ENCODE measurements at regions of chr2 and their contacts with region 1.

Region 1: DNA sequence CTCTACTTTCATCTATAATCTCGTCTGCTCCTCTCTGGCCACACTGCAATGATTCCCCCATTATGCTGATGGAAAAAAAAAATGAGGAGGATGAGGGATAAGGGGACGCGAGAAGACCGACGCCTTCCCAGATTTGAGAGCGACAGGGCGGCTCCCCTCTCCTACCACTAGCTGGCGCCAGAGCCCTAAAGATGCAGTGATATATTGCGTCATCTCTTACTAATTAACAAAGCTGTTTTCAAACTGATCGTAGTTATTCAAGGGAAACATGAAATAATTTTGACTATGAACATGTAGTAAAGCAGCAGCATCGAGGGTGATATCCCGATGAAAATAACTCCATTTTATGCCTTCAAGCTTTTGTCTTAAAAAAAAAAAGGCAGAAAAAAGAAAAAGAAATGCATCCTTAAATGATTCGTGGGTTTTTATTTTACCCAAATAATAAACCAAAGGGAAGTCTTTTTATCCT is 48.0 kb upstream of the HNRNPA3 start:
- DNase-seq: peak; percentile 90
- H3K4me3 Mint-ChIP-seq: no peak overlapping the region
- H3K27ac Mint-ChIP-seq: no peak overlapping the region
- H3K4me1 Mint-ChIP-seq: peaks cover 21% of the 10 kb centered on the region
- H3K27me3 Mint-ChIP-seq: no peaks in the 10 kb centered on the region

Region 2: GRCh38 chr2:176518823-176519222 is 645.8 kb before region 1 on chr2:
- CTCF ChIA-PET with region 1: no interaction called
- intact Hi-C with region 1: no loop called
- DNase-seq: no peak
- H3K4me3 Mint-ChIP-seq: no peak overlapping the region
- H3K27ac Mint-ChIP-seq: no peak overlapping the region
- H3K4me1 Mint-ChIP-seq: peaks cover 3% of the 10 kb centered on the region
- H3K27me3 Mint-ChIP-seq: no peaks in the 10 kb centered on the region

Region 3: GRCh38 chr2:176814306-176815052 is 350.1 kb before region 1 on chr2:
- CTCF ChIA-PET with region 1: no interaction called
- intact Hi-C with region 1: no loop called
- DNase-seq: peak; percentile 19
- H3K4me3 Mint-ChIP-seq: no peak overlapping the region
- H3K27ac Mint-ChIP-seq: no peak overlapping the region
- H3K4me1 Mint-ChIP-seq: peaks cover 12% of the 10 kb centered on the region
- H3K27me3 Mint-ChIP-seq: no peaks in the 10 kb centered on the region

Region 4: GRCh38 chr2:177106212-177106611 is 58.4 kb before region 1 on chr2:
- CTCF ChIA-PET with region 1: no interaction called
- intact Hi-C with region 1: no loop called
- DNase-seq: peak; percentile 8
- H3K4me3 Mint-ChIP-seq: no peak overlapping the region
- H3K27ac Mint-ChIP-seq: no peak overlapping the region
- H3K4me1 Mint-ChIP-seq: no peaks in the 10 kb centered on the region
- H3K27me3 Mint-ChIP-seq: peaks cover 6% of the 10 kb centered on the region

Region 5: GRCh38 chr2:177183860-177184259 is 19.2 kb after region 1 on chr2:
- CTCF ChIA-PET with region 1: interaction called, 10 read pairs
- intact Hi-C with region 1: no loop called
- DNase-seq: no peak
- H3K4me3 Mint-ChIP-seq: no peak overlapping the region
- H3K27ac Mint-ChIP-seq: no peak overlapping the region
- H3K4me1 Mint-ChIP-seq: no peaks in the 10 kb centered on the region
- H3K27me3 Mint-ChIP-seq: no peaks in the 10 kb centered on the region

Region 6: GRCh38 chr2:177252808-177253531 is 88.4 kb after region 1 on chr2:
- CTCF ChIA-PET with region 1: interaction called, 5 read pairs
- intact Hi-C with region 1: loop called (anchors 1 kb)
- DNase-seq: no peak
- H3K4me3 Mint-ChIP-seq: no peak overlapping the region
- H3K27ac Mint-ChIP-seq: peak overlapping the region; percentile 88
- H3K4me1 Mint-ChIP-seq: peaks cover 88% of the 10 kb centered on the region
- H3K27me3 Mint-ChIP-seq: no peaks in the 10 kb centered on the region

Region 7: GRCh38 chr2:177296040-177296439 is 131.4 kb after region 1 on chr2:
- CTCF ChIA-PET with region 1: interaction called, 73 read pairs
- intact Hi-C with region 1: loop called (anchors 1 kb)
- DNase-seq: no peak
- H3K4me3 Mint-ChIP-seq: no peak overlapping the region
- H3K27ac Mint-ChIP-seq: no peak overlapping the region
- H3K4me1 Mint-ChIP-seq: peaks cover 17% of the 10 kb centered on the region
- H3K27me3 Mint-ChIP-seq: no peaks in the 10 kb centered on the region

Region 8: DNA sequence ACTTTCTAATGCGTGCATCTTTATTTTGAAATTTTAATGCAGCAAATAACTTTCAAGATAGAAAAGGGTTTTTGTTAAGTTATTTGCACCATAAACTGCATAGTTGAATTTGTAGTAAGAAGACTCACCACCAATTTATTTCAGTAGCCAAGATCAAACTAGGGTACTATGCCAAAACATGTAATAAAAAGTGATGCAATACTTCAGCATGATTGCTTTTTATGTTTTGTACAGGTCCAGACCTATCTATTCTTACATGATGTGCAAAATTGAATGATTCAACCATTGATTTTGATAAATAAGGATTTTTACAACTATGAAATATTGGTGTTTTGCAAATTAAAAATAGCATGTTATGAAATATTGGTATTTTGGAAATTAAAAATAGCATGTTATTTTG is 254.7 kb after region 1 on chr2:
- CTCF ChIA-PET with region 1: interaction called, 27 read pairs
- intact Hi-C with region 1: loop called (anchors 1 kb)
- DNase-seq: no peak
- H3K4me3 Mint-ChIP-seq: no peak overlapping the region
- H3K27ac Mint-ChIP-seq: peak overlapping the region; percentile 63
- H3K4me1 Mint-ChIP-seq: peaks cover 37% of the 10 kb centered on the region
- H3K27me3 Mint-ChIP-seq: no peaks in the 10 kb centered on the region

Region 9: DNA sequence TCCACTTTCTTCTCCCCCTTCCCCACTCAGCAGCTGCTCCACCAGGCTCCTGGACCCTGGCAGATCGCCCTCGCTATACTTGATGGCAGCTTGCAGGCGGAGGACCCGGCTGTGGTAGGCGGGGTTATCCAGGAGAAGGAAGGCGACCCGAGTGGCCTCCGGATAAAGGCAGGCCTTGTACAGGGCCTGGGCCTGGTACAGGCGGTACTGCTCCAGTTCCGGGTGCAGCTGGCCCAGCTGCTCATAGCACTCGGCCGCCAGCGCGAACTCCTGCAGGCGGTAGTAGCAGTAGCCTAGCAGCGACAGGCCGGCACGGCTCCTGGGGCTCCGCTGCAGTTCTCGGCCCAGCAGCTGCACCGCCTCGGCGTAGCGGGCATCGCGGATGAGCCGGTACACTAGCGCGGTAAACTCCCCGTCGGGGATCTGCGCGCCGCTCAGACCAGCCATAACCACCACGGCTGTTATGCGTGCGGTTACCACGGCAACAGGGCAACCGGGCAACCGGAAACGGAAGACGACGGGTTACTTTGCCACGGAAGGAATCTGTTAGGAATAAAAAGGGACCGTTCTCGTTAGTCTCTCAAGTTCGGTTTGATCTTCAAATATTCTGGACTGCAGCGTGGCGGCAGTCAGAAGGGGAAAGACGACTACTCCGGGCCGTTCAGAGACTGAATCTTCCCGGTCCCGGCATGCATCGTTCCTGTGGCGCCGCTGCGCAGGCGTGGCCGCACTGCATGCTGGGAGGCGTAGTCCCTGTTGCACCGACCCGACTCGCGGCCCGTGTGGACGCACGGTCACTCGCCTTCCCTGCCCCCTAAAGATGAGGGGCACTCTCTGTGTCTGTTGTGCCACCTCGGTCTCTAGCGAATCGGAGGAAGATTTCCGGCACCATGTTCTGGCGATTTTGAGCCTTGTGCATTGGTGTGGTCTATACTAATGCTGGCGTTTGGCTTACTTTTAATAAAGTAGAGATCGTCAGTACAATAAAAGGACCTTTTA is 453.9 kb after region 1 on chr2:
- CTCF ChIA-PET with region 1: no interaction called
- intact Hi-C with region 1: loop called (anchors 2 kb)
- DNase-seq: peak; percentile 95
- H3K4me3 Mint-ChIP-seq: peak overlapping the region; percentile 93
- H3K27ac Mint-ChIP-seq: peak overlapping the region; percentile 96
- H3K4me1 Mint-ChIP-seq: peaks cover 3% of the 10 kb centered on the region
- H3K27me3 Mint-ChIP-seq: no peaks in the 10 kb centered on the region

Region 10: DNA sequence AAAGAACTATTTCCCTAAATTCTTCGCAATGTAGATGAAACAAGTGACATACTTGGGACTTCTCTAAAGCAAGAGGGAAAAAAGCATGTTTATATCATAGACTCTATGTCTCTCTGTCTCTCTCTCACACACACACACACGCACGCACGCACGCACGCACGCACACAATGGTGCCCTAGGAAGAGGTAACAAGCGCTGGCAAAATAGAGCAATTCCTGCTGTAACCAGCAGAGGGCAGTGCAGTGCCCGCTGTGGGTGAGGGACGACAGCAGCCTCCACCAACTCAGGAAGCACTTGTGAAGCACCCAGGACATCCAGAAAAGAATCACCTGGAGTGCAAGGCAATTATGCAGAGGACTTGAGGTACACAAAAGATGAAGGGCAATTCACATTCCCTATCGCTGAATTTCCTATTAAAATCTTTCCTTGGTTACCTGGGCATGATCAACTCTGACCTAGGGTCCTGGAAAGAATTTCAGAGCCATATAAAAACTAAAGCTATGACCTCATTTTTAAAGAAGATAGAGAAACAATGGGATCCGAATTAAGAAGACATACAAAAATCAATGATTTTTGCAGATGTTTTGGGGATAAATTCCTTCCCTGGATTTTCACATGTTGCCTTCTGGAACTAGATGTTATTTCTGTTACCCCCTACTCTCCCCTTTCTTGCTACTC is 741.6 kb after region 1 on chr2:
- CTCF ChIA-PET with region 1: no interaction called
- intact Hi-C with region 1: loop called (anchors 10 kb)
- DNase-seq: peak; percentile 80
- H3K4me3 Mint-ChIP-seq: no peak overlapping the region
- H3K27ac Mint-ChIP-seq: no peak overlapping the region
- H3K4me1 Mint-ChIP-seq: no peaks in the 10 kb centered on the region
- H3K27me3 Mint-ChIP-seq: peaks cover 2% of the 10 kb centered on the region

Measured in activated naive CD4-positive, alpha-beta T cell treated with anti-CD3 and anti-CD28 coated beads for 36 hours (primary cell).